HEK293T (cell line): ENCODE measurements at regions of chr11 and their contacts with region 1.

Region 1: DNA sequence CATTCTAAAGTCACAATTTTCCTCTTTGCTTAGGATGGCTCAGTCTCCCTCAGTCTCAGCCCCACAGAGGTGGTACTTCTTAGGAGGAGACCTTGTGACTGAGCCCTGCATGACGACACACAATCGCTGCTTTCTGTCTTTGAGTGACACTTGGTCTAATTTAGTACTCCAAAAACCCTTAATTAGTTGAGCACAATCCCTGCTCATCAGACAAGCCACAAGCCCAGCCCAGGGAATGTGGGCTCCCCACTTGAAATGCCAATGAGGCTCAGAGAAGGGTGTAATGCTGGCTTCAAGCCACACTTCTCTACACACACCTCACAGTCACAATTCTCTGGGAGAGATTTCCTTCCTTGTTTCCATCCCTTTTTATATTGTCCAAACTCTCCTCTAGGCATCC is 101.8 kb downstream of the FEZ1 start:
- DNase-seq: no peak

Region 2: GRCh38 chr11:125404776-125405435 is 10.6 kb after region 1 on chr11:
- CTCF ChIA-PET with region 1: interaction called, 13 read pairs
- POLR2A ChIA-PET with region 1: no interaction called
- DNase-seq: peak; percentile 91

Region 3: DNA sequence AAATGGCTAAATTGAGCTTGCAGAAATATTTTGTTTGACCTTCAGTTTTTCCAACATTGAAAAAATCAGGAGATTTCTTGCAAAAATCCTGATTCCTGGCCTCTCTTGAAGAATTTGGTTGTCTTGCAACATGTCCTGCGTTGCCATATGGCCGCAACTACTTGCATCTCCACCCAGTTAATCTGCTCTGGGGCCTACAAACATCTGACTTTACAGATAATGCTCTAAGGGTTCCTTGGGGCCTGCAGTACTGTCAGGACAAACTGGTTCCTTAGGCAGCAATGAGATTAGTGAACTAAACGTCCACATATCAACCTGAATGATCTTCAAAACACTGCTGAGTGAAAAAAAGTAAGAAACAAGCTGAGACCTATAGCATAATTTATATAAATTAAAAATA is 138.4 kb after region 1 on chr11:
- CTCF ChIA-PET with region 1: no interaction called
- POLR2A ChIA-PET with region 1: no interaction called
- DNase-seq: no peak